Colonic mucosa (tissue), 4 donors: ENCODE measurements at regions of chr2 and their contacts with region 1.

Region 1: GRCh38 chr2:230987137-230988020 is 8.5 kb upstream of the SPATA3 start:
- DNase-seq: peak; percentile 85
- H3K4me3 ChIP-seq: peak overlapping the region; percentile 23
- H3K27ac ChIP-seq: no peak overlapping the region
- H3K4me1 ChIP-seq: peaks cover 3% of the 10 kb centered on the region
- H3K27me3 ChIP-seq: no peaks in the 10 kb centered on the region
- CTCF ChIP-seq: peak; percentile 97

Region 2: DNA sequence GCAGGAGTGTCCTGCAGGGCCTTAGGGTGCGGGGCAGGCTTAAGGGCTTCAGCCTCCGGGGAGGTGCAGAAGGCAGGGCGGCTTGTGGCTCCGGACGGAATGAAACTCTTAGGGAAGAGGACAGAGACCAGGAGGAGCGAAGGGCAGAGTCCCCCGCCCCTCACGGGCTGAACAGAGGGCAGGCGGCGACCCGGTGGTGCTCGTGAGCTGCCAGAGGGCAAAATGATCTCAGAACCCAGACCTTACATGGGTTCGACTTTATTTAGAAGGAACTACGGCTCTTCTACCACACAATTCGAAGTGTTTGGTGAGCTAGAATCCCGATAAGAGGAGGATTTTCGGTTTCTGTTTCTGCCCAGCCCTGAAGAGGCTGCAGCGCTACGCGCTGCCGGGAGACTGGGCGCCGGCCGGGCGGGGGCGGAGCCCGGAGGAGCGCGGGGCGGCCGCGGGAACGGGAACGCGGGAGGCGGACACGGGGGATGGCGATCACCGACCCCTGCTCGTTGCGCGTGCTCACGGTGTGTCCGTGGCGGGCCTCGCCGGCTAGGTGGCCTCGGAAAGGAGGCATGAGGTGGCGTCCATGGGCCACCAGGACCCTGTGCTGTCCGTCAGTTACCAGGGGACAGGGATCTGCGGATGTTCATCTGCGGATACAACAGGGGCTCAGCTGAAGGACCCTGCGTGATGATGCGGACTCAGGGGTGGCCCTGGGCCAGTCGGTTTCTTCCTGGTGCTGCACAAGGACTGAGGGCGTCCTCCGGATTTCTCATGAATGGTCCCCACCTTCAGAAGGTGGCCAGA is 575.6 kb before region 1 on chr2:
- intact Hi-C with region 1: no loop called
- DNase-seq: peak; percentile 75
- H3K4me3 ChIP-seq: peak overlapping the region; percentile 65
- H3K27ac ChIP-seq: peak overlapping the region; percentile 92
- H3K4me1 ChIP-seq: peaks cover 4% of the 10 kb centered on the region
- H3K27me3 ChIP-seq: no peaks in the 10 kb centered on the region
- CTCF ChIP-seq: no peak

Region 3: GRCh38 chr2:230824406-230824978 is 162.9 kb before region 1 on chr2:
- intact Hi-C with region 1: loop called (anchors 2 kb)
- DNase-seq: peak; percentile 64
- H3K4me3 ChIP-seq: no peak overlapping the region
- H3K27ac ChIP-seq: no peak overlapping the region
- H3K4me1 ChIP-seq: no peaks in the 10 kb centered on the region
- H3K27me3 ChIP-seq: peaks cover 9% of the 10 kb centered on the region
- CTCF ChIP-seq: peak; percentile 58

Region 4: GRCh38 chr2:230847883-230848388 is 139.4 kb before region 1 on chr2:
- intact Hi-C with region 1: loop called (anchors 5 kb)
- DNase-seq: peak; percentile 97
- H3K4me3 ChIP-seq: no peak overlapping the region
- H3K27ac ChIP-seq: no peak overlapping the region
- H3K4me1 ChIP-seq: no peaks in the 10 kb centered on the region
- H3K27me3 ChIP-seq: no peaks in the 10 kb centered on the region
- CTCF ChIP-seq: peak; percentile 91

Region 5: GRCh38 chr2:230913406-230914143 is 73.8 kb before region 1 on chr2:
- intact Hi-C with region 1: loop called (anchors 5 kb)
- DNase-seq: peak; percentile 67
- H3K4me3 ChIP-seq: no peak overlapping the region
- H3K27ac ChIP-seq: no peak overlapping the region
- H3K4me1 ChIP-seq: no peaks in the 10 kb centered on the region
- H3K27me3 ChIP-seq: no peaks in the 10 kb centered on the region
- CTCF ChIP-seq: peak; percentile 60

Region 6: GRCh38 chr2:230924470-230925341 is 62.7 kb before region 1 on chr2 and contains the start of gene GPR55:
- intact Hi-C with region 1: loop called (anchors 5 kb)
- DNase-seq: peak; percentile 50
- H3K4me3 ChIP-seq: no peak within 1 kb of the TSS
- H3K27ac ChIP-seq: no peak within 1 kb of the TSS
- H3K4me1 ChIP-seq: no peaks in the 10 kb centered on the region
- H3K27me3 ChIP-seq: no peaks in the 10 kb centered on the region
- CTCF ChIP-seq: peak; percentile 23
- total RNA-seq, gene GPR55: 0.35 to 1.0 TPM

Region 7: DNA sequence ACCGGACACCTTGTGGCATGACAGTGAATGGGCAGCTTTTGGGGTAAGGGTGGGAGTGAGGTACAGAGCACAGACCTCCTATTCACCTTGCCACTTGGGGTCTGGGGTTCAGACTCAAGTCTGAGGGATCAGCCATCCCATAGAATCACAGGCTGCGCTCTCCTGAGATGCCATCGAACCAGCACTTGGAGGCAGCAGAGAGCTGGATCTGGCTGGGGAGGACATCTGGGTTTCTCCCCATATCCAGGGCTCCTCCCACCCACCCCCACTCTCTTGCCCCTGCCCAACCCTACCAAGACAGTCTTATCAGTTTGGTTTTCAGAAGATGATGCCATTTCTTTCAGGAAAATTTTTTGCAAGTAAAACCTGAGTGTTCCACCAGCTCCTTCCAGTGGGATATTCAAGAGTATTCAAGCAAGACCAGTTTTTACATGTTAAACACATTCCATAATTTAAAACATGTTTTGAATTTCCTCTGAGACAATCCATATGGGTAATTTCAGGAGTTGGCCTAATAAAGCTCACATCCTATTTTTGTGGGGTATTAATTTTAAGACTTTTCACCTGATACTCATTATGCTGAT is 576.1 kb after region 1 on chr2:
- intact Hi-C with region 1: no loop called
- DNase-seq: peak; percentile 38
- H3K4me3 ChIP-seq: no peak overlapping the region
- H3K27ac ChIP-seq: no peak overlapping the region
- H3K4me1 ChIP-seq: no peaks in the 10 kb centered on the region
- H3K27me3 ChIP-seq: no peaks in the 10 kb centered on the region
- CTCF ChIP-seq: peak; percentile 49